Heart left ventricle (tissue), 16 donors: ENCODE measurements at regions of chr2 and their contacts with region 1.

Region 1: GRCh38 chr2:170815746-170816503 is 762 bp upstream of the GAD1 start:
- DNase-seq: peak in 4 of 5 donors; percentile 34 to 74 (median 51)
- ATAC-seq: peak in 3 of 4 donors; percentile 58 to 78 (median 66)
- H3K4me3 ChIP-seq: peak overlapping the region in 11 of 12 donors; percentile 10 to 56 (median 41)
- H3K27ac ChIP-seq: no peak overlapping the region
- H3K4me1 ChIP-seq: peaks cover 13 to 65% (median 45%) of the 10 kb centered on the region in 12 donors
- H3K27me3 ChIP-seq: peaks cover 66 to 94% (median 80%) of the 10 kb centered on the region in 9 donors
- CTCF ChIP-seq: peak; percentile 57 to 79 (median 69)
- POLR2A ChIP-seq: no peak

Region 2: DNA sequence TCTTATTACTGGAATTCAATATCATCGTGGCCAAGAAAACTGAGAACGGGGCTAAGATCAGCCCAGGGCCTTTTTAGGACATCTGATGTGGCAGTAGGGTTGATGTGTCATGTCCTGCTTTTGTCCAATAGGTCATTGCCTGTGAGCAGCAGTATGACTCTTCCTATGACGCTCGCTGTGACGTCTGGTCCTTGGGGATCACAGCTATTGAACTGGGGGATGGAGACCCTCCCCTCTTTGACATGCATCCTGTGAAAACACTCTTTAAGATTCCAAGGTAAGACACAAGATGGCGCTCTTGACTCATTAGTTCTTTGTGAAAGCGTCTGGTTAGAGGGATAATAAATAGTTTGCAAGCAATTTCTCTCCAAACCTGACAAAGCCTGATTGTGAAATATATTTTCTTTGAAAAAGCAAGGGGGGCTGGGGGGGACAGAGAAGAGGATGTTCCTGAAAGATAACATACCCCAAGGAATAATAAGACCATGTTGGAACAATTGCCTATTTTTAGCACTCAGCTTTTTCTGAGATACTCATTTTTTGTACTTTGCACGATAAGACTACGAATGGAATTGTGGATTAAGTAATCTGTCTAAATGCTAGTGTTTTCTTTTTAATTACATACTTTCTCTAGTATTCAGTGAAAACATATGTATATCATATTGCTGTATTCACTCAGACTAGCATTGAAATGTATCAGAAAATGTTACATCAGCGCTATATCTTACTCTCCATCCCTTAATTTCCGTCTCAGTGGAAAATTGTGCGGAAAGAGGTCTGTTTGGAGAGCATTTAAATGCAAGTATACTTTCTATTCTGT is 579.9 kb before region 1 on chr2:
- intact Hi-C with region 1: loop called in 8 of 10 experiments (anchors 5 to 10 kb)
- DNase-seq: no peak
- ATAC-seq: peak in 3 of 4 donors; percentile 29 to 45 (median 30)
- H3K4me3 ChIP-seq: no peak overlapping the region
- H3K27ac ChIP-seq: no peak overlapping the region
- H3K4me1 ChIP-seq: no peaks in the 10 kb centered on the region
- H3K27me3 ChIP-seq: peaks cover 0 to 18% (median 0%) of the 10 kb centered on the region in 9 donors
- CTCF ChIP-seq: peak; percentile 17 to 56 (median 46)
- POLR2A ChIP-seq: no peak

Region 3: GRCh38 chr2:170361090-170361936 is 454.6 kb before region 1 on chr2:
- intact Hi-C with region 1: loop called in 6 of 10 experiments (anchors 5 kb)
- DNase-seq: peak in 2 of 5 donors; percentile 14 to 30
- ATAC-seq: peak in 2 of 4 donors; percentile 52 to 54
- H3K4me3 ChIP-seq: no peak overlapping the region
- H3K27ac ChIP-seq: no peak overlapping the region
- H3K4me1 ChIP-seq: no peaks in the 10 kb centered on the region
- H3K27me3 ChIP-seq: peaks cover 0 to 49% (median 4%) of the 10 kb centered on the region in 9 donors
- CTCF ChIP-seq: peak; percentile 39 to 71 (median 58)
- POLR2A ChIP-seq: no peak

Region 4: GRCh38 chr2:170409164-170409535 is 406.8 kb before region 1 on chr2:
- intact Hi-C with region 1: loop called (anchors 1 to 10 kb)
- DNase-seq: peak in 4 of 5 donors; percentile 48 to 71 (median 68)
- ATAC-seq: peak in 2 of 4 donors; percentile 49 to 64
- H3K4me3 ChIP-seq: peak overlapping the region in 4 of 12 donors; percentile 6 to 30 (median 21)
- H3K27ac ChIP-seq: no peak overlapping the region
- H3K4me1 ChIP-seq: peaks cover 0 to 13% (median 2%) of the 10 kb centered on the region in 12 donors
- H3K27me3 ChIP-seq: peaks cover 0 to 40% (median 2%) of the 10 kb centered on the region in 9 donors
- CTCF ChIP-seq: peak; percentile 73 to 95 (median 87)
- POLR2A ChIP-seq: no peak

Region 5: GRCh38 chr2:170639635-170640034 is 176.3 kb before region 1 on chr2:
- intact Hi-C with region 1: no loop called
- DNase-seq: no peak
- ATAC-seq: no peak
- H3K4me3 ChIP-seq: no peak overlapping the region
- H3K27ac ChIP-seq: no peak overlapping the region
- H3K4me1 ChIP-seq: no peaks in the 10 kb centered on the region
- H3K27me3 ChIP-seq: peaks cover 0 to 11% (median 0%) of the 10 kb centered on the region in 9 donors
- CTCF ChIP-seq: no peak
- POLR2A ChIP-seq: no peak

Region 6: GRCh38 chr2:170707821-170708795 is 107.8 kb before region 1 on chr2:
- intact Hi-C with region 1: loop called in 1 of 10 experiments (anchors 5 kb)
- DNase-seq: no peak
- ATAC-seq: no peak
- H3K4me3 ChIP-seq: no peak overlapping the region
- H3K27ac ChIP-seq: no peak overlapping the region
- H3K4me1 ChIP-seq: peaks cover 0 to 10% (median 0%) of the 10 kb centered on the region in 12 donors
- H3K27me3 ChIP-seq: peaks cover 8 to 69% (median 36%) of the 10 kb centered on the region in 9 donors
- CTCF ChIP-seq: no peak
- POLR2A ChIP-seq: no peak